Kidney (tissue), 22 donors: ENCODE measurements at regions of chr19 and their contacts with region 1.

Region 1: DNA sequence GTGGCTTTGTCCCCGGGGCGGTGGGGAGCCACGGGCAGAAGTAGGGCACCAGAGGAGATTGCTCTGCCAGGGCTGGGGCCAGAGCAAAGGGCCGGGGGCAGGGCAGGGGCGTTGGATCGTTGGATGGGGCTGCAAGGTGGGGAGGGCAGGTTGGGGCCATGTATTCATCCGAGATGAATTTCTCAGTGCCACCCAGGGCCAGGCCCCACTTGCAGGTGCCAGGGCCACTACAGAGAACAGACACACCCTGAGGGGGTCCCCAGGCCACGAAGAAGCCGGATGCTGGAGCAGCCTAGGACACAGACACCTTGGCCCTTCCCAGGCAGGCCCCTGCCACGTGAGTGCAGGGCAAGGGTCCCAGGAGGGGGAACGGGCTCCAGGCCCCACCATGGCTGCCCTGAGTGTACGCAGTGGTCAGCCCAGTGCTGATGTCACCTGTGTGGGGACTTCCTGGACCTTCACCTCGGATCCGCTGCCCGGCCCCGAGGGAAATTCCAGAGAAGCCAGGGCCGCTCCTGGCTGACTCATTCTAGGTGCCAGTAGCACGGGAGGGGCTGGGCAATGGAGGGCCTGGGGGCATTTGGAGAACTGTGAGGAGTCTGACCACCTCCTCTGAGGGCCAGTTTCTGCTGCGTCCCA is 9.6 kb upstream of the SBNO2 start:
- DNase-seq: peak in 3 of 5 donors; percentile 43 to 92 (median 45)
- H3K4me3 ChIP-seq: no peak overlapping the region
- H3K27ac ChIP-seq: peak overlapping the region; percentile 85 to 87
- H3K4me1 ChIP-seq: peaks cover 0 to 13% (median 0%) of the 10 kb centered on the region in 3 donors
- H3K27me3 ChIP-seq: no peaks in the 10 kb centered on the region
- CTCF ChIP-seq: no peak

Region 2: DNA sequence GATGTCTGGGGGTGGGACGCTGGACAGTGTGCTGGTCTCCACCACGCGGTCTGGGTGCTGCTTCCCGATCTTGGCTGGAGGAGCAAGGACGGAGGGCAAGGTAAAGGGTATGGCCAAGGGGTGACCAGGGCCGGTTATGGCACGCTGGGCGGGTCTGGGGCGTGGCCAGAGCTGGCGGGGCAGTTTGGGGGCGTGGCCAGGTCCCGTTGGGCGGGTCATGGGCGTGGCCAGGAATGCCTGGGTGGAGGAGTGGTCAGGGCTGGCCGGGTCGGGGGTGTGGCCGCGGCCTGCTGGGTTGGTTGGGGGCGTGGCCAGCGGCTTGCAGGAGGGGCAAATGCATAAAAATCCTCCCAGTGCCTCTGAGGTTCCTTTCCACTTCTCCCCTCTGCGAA is 60.7 kb before region 1 on chr19:
- intact Hi-C with region 1: loop called (anchors 10 kb)
- DNase-seq: peak; percentile 46 to 94 (median 72)
- H3K4me3 ChIP-seq: no peak overlapping the region
- H3K27ac ChIP-seq: no peak overlapping the region
- H3K4me1 ChIP-seq: peaks cover 0 to 4% (median 0%) of the 10 kb centered on the region in 3 donors
- H3K27me3 ChIP-seq: no peaks in the 10 kb centered on the region
- CTCF ChIP-seq: no peak

Region 3: DNA sequence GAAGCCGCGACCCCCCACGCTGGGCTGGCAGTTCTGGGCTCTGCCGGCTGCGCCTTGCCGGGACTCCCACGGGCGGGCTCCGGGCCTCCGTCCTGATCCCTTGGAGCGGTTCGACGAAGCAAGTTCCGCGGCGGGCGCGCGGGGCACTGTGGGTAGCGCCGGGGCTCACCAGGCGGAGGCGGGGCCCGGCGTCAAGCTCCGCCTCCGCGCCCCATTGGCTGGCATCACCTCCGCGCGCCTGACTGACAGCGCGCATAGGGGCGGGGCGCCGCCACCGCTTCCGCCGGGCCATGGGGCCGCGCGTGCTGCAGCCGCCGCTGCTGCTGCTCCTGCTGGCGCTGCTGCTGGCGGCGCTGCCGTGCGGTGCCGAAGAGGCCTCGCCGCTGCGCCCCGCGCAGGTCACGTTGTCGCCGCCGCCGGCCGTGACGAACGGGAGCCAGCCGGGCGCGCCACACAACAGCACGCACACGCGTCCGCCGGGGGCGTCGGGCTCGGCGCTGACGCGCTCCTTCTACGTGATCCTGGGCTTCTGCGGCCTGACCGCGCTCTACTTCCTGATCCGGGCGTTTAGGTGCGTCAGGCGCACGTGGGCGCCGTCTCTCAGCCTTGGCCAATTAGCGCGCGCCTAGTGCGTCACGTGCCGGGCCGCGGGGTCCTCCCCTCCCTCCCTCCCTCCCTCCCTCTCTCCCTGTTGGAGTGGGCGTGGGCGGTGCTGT is 91.8 kb after region 1 on chr19 and contains the start of gene FAM174C:
- intact Hi-C with region 1: no loop called
- DNase-seq: peak; percentile 97 to 99 (median 99)
- H3K4me3 ChIP-seq: peak within 1 kb of the TSS; percentile 44 to 75 (median 67)
- H3K27ac ChIP-seq: peak within 1 kb of the TSS; percentile 98 to 99
- H3K4me1 ChIP-seq: peaks cover 0 to 47% (median 22%) of the 10 kb centered on the region in 3 donors
- H3K27me3 ChIP-seq: no peaks in the 10 kb centered on the region
- CTCF ChIP-seq: no peak
- total RNA-seq, gene FAM174C: 35.3 TPM

Region 4: DNA sequence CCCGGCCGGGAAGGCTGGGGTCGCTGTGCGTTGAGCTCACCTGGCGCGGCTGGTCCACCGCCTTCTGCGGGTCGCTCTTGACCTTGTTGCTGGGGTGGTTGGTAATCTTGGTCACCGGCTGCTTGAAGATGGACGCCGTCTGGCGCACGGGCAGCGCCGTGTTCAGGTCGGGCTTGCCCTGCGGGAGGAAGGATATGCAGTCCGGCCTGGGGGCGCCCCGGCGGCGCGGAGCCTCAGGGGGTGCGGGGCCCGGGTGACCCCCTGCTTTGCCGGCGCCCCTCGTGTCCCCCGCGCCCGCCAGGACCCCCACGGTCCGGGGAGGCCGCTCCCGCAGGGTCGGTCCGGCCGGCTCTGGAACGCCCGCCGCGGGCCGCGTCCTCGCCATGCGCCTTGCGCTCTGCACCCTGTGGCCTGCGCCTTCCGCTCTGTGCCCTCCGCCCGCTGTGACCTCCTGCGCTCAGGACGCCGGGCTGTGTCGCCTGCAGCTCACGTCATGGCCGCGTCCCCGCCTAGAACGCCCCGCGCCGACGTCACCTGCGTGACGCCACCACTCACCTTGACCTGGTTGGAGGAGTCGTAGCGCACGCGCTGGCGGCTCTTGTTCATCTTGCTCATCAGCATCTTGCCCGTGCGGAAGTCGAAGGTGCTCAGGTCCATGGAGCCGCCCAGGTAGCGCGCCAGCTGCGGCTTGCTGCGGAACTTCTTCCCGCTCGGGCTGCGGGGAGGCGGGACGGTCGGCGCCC is 401.0 kb after region 1 on chr19:
- intact Hi-C with region 1: no loop called
- DNase-seq: no peak
- H3K4me3 ChIP-seq: no peak overlapping the region
- H3K27ac ChIP-seq: no peak overlapping the region
- H3K4me1 ChIP-seq: peaks cover 0 to 8% (median 7%) of the 10 kb centered on the region in 3 donors
- H3K27me3 ChIP-seq: no peaks in the 10 kb centered on the region
- CTCF ChIP-seq: no peak